Activated CD4-positive, alpha-beta memory T cell treated with anti-CD3 and anti-CD28 coated beads for 36 hours (primary cell): ENCODE measurements at regions of chr17 and their contacts with region 1.

Region 1: DNA sequence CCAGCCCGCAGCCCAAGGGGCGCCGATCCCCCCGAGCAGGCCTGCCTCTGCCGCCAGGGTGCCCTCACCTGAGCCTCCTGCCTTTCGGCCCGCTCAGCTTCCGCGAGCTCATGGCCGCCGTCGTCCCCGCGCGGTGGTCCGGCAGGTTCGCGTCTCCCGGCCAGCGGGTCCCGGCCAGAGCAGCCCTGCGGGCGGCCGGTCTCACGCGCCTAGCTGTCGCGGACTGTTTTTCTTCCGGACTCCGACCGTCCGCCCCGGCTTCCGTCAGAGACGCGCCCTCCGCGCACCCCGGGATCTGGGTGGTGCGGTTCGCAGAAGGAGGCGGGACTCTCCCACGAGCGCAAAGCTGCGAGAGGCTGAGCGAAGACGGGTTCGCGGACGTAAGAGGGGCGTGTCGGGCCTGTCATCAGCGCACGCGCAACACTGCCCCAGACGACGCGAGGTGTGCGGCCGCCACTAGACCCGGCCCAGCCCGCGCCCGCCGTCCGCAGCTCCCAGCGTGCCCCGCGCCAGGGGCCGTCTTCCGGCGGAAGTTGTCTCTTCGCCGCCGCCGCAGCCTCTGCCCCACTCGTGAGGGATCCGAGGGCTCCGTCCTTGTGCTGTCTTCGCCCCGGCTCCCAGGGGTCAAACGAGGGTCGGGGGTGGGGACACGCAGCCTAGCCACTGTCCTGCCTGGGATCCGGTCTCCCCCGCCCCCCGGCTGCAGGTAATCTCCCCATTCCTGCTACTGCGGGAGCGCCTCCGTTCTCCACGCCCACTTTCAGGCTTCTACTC is at the start of gene INPP5K:
- DNase-seq: peak; percentile 99
- H3K4me3 Mint-ChIP-seq: peak within 1 kb of the TSS; percentile 86
- H3K27ac Mint-ChIP-seq: peak within 1 kb of the TSS; percentile 66
- H3K4me1 Mint-ChIP-seq: peaks cover 24% of the 10 kb centered on the region
- H3K27me3 Mint-ChIP-seq: no peaks in the 10 kb centered on the region
- total RNA-seq, gene INPP5K: 21.2 to 24.0 TPM

Region 2: DNA sequence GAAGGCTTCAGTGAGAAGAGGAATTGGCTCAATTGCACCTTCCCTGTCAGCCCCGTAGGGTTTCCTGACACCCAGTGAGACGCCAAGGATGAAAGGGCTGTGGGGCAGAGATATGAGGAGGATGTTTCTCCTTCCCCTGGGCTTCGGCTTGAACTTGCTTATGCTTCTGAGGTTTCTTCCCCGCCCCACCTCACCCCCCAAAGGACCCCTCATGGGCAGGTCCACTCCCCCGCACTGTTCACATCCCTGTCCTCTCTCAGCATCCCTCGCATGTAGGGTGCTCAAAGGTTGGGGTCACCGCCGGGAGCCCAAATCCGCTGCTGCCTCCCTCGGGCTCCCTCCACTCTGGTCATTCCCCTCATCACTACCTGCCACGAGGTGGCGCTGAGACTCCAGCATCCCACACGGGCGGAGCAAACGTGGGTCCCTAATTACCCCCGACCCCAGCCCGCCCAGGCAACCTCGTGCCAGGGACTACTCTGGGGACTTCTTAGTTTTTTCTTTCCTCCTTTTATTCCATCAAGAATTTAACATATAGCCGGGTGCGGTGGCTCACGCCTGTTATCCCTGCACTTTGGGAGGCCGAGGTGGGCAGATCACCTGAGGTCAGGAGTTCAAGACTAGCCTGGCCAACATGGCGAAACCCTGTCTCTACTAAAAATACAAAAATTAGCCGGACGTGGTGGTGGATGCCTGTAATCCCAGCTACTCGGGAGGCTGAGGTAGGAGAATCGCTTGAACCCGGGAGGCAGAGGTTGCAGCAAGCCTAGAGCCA is 240.4 kb before region 1 on chr17:
- CTCF ChIA-PET with region 1: interaction called, 3 read pairs
- POLR2A ChIA-PET with region 1: no interaction called
- intact Hi-C with region 1: loop called (anchors 1 kb)
- DNase-seq: peak; percentile 79
- H3K4me3 Mint-ChIP-seq: peak overlapping the region; percentile 6
- H3K27ac Mint-ChIP-seq: no peak overlapping the region
- H3K4me1 Mint-ChIP-seq: peaks cover 3% of the 10 kb centered on the region
- H3K27me3 Mint-ChIP-seq: peaks cover 16% of the 10 kb centered on the region

Region 3: DNA sequence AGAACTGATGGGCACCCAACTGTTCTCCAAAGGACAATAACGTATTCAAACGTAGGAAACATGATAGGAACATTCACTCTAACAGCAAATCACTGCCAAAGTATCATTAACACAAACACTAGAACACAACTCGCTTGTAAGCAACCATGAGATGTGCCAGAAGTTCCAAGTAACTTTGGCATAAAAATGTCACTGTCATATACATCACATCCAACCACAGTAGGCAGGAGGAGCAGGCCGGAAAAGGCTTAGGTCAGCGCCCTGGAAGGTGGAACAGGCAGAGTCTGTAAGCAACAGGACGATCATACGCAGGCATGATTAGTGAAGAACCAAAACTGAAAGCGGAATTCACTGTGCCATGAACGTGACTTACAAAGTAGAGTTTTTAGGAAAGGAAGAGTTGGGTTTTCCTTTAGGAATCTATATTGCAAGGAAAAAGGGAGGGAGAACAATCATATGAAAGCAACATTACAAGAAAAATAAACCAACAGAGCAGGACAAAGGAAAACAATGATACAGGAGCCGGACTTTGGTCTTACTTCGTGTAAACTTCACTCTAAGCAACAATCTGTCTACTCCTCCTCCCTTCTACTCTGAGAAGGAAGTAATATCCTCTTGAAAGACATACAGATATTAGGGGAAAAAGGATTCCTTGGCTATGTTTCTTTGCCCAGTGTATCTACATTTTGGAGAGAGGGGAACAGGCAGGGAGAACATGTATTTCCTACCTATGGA is 168.8 kb before region 1 on chr17:
- CTCF ChIA-PET with region 1: no interaction called
- POLR2A ChIA-PET with region 1: no interaction called
- intact Hi-C with region 1: loop called (anchors 5 kb)
- DNase-seq: peak; percentile 28
- H3K4me3 Mint-ChIP-seq: peak overlapping the region; percentile 38
- H3K27ac Mint-ChIP-seq: peak overlapping the region; percentile 62
- H3K4me1 Mint-ChIP-seq: peaks cover 34% of the 10 kb centered on the region
- H3K27me3 Mint-ChIP-seq: no peaks in the 10 kb centered on the region

Region 4: DNA sequence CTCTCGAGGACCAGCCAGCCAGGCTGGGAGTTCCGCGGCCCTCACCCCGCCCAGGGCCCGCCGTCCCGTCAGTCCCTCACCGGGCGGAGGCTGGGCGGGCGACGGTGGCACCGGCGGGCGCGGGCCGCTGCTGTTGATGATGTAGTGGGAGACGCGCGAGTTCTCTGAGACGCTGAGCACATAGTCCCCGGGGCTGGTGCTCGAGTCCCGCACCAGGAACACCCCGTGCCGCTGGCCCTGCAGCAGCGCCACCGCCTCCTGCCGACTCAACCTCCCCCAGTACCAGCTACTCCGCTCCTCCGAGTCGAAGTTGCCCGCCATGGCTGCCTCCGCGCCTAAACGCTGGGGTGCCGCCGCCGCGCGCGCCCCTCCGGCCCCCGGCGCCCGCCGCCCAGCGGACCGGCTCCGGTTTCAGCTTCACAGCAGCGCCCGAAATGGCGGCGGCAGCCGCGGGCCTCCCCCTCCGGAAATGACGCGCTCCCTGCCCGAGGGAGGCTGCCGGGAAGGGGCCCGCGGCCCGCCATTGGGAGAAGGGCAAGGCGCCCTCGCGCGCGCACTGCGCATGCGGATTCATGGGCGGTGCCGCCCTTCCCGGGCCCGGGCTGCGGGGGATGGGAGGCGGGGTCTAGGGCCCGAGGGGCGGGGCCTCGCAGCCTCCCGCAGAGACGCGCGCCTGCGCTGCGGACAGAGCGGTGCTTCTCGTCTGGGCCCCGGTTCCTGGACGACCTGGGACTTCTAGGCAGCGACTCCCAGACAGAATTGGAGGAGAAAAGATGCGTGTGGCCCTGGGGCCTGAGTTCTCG is 60.6 kb before region 1 on chr17 and contains the start of gene CRK:
- CTCF ChIA-PET with region 1: interaction called, 7 read pairs
- POLR2A ChIA-PET with region 1: interaction called, 5 read pairs
- intact Hi-C with region 1: loop called (anchors 1 kb)
- DNase-seq: peak; percentile 99
- H3K4me3 Mint-ChIP-seq: peak within 1 kb of the TSS; percentile 85
- H3K27ac Mint-ChIP-seq: peak within 1 kb of the TSS; percentile 88
- H3K4me1 Mint-ChIP-seq: peaks cover 52% of the 10 kb centered on the region
- H3K27me3 Mint-ChIP-seq: peaks cover 5% of the 10 kb centered on the region
- total RNA-seq, gene CRK: 14.1 to 17.8 TPM

Region 5: DNA sequence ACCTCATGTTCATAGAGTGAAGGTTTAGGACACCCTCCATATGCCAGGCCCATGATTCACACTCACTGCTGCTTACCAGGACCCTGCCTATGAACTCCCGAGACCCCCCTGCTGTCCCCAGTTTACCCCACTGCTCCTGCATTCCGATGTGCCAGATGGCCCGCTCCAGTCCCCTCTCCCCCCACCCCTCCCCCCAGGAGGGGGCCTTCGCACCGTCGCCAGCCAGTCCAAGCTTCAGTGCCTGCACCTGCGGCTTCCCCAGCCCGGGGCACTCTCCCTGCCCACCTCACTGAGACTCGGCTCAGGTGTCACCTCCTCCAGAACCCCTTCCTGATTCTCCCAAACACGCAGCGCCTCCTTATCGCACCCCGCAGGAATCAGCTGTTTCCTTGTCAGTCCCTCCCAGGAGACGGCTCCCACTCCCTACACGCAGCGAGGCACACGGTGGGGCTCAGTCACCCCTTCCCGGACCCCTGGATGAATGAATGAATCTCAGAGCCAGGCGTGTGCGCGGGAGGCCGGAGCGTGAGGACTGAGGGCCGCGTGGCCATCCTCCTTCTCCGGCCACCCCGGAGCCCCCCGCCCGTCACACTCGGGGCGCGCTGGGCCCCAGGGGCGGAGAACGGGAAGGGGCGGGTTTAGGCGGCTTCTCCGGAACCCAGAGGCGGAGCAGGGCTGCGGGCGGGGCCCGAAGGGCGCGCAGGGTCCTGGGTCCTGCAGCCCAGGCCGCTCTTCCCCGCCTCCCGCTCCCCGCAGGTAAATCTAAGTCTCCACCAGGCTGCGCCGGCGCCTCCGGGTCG is 25.7 kb before region 1 on chr17:
- CTCF ChIA-PET with region 1: interaction called, 5 read pairs
- POLR2A ChIA-PET with region 1: interaction called, 6 read pairs
- intact Hi-C with region 1: loop called (anchors 2 kb)
- DNase-seq: peak; percentile 80
- H3K4me3 Mint-ChIP-seq: peak overlapping the region; percentile 87
- H3K27ac Mint-ChIP-seq: peak overlapping the region; percentile 33
- H3K4me1 Mint-ChIP-seq: peaks cover 23% of the 10 kb centered on the region
- H3K27me3 Mint-ChIP-seq: no peaks in the 10 kb centered on the region

Region 6: GRCh38 chr17:1561400-1562175 is 45.0 kb after region 1 on chr17:
- CTCF ChIA-PET with region 1: interaction called, 5 read pairs
- POLR2A ChIA-PET with region 1: no interaction called
- intact Hi-C with region 1: loop called (anchors 1 kb)
- DNase-seq: peak; percentile 53
- H3K4me3 Mint-ChIP-seq: peak overlapping the region; percentile 82
- H3K27ac Mint-ChIP-seq: peak overlapping the region; percentile 49
- H3K4me1 Mint-ChIP-seq: peaks cover 38% of the 10 kb centered on the region
- H3K27me3 Mint-ChIP-seq: no peaks in the 10 kb centered on the region